ENCODE measurements at regions of chr7 and their contacts with region 1.

Region 1: GRCh38 chr7:39446546-39446945 is 119.7 kb upstream of the YAE1 start:
- DNase-seq: no peak
- H3K4me3 Mint-ChIP-seq: no peak overlapping the region
- H3K27ac Mint-ChIP-seq: no peak overlapping the region
- H3K4me1 Mint-ChIP-seq: no peaks in the 10 kb centered on the region
- H3K27me3 Mint-ChIP-seq: peaks cover 39% of the 10 kb centered on the region
- CTCF ChIP-seq: no peak

Region 2: DNA sequence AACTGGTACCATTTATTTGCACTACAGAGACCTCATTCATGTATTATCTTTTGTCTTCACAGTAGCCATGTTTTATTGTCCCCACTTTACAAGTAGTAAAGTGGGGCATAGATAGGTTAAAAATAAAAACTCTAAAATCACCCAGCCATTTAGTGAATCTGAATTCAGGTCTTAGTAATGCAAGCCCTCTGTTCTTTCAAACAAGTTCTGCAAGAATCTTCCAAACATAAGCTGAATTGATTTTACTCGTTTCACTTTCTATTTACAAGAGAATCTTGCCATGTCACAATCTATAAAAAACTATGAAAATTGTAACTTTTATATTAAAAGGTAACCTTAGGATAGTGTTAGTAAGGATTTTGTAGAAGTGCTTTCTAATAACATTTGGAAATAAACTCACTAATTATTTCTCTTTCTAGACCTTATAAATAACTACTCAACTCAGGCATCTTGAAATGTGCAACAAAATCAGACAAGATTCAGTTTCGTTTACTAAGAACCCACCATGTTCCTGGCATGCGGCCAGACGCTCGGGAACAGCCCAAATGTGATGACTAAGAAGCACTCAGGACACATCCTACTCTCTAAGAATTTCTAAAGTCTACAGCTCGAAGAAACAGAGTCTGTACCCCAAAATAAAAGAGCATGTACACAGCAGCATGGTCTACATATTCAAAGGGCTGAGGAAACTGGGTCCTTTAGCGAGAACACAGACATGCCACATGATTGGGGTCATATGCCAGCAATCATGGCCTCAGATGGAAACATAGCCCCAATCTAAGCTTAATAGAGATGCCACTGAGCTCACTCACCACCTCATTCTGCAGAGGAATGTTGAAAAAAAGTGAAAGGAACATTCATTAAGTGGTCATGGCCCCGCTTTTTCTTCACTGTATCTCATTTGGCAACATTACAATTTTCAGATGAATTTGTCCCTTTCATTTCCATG is 983.0 kb before region 1 on chr7:
- CTCF ChIA-PET with region 1: no interaction called
- intact Hi-C with region 1: loop called (anchors 10 kb)
- DNase-seq: peak; percentile 35
- H3K4me3 Mint-ChIP-seq: no peak overlapping the region
- H3K27ac Mint-ChIP-seq: no peak overlapping the region
- H3K4me1 Mint-ChIP-seq: no peaks in the 10 kb centered on the region
- H3K27me3 Mint-ChIP-seq: peaks cover 55% of the 10 kb centered on the region
- CTCF ChIP-seq: no peak

Region 3: DNA sequence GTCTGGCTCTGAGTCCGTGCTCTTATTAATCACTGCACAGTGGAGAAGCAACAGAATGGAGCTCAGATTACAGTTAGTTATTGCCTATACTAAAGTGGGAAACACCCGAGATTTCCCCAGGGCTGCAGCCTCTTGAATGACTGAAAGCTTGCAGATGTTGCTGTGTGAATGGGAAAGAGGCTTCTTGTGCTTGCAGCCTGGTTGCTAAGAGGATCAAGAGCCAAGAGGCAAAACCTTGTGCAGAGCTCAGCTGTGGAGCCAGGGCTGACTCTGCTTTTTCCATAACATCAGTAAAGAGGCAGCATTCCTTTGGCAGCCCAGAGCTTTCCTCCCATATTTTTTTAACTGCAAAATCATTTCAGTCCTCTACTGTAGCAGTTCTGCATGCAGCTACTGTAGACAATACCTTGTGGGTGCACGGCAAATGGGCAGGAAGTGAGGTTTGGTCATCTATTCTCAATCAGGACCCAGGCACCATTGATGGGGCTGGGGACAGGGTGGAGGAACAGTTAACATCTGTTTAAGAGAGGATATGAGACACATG is 263.3 kb after region 1 on chr7:
- CTCF ChIA-PET with region 1: no interaction called
- intact Hi-C with region 1: no loop called
- DNase-seq: no peak
- H3K4me3 Mint-ChIP-seq: no peak overlapping the region
- H3K27ac Mint-ChIP-seq: no peak overlapping the region
- H3K4me1 Mint-ChIP-seq: no peaks in the 10 kb centered on the region
- H3K27me3 Mint-ChIP-seq: no peaks in the 10 kb centered on the region
- CTCF ChIP-seq: no peak

Measured in Calu3 (cell line).